ENCODE measurements at regions of chr5 and their contacts with region 1.

Region 1: DNA sequence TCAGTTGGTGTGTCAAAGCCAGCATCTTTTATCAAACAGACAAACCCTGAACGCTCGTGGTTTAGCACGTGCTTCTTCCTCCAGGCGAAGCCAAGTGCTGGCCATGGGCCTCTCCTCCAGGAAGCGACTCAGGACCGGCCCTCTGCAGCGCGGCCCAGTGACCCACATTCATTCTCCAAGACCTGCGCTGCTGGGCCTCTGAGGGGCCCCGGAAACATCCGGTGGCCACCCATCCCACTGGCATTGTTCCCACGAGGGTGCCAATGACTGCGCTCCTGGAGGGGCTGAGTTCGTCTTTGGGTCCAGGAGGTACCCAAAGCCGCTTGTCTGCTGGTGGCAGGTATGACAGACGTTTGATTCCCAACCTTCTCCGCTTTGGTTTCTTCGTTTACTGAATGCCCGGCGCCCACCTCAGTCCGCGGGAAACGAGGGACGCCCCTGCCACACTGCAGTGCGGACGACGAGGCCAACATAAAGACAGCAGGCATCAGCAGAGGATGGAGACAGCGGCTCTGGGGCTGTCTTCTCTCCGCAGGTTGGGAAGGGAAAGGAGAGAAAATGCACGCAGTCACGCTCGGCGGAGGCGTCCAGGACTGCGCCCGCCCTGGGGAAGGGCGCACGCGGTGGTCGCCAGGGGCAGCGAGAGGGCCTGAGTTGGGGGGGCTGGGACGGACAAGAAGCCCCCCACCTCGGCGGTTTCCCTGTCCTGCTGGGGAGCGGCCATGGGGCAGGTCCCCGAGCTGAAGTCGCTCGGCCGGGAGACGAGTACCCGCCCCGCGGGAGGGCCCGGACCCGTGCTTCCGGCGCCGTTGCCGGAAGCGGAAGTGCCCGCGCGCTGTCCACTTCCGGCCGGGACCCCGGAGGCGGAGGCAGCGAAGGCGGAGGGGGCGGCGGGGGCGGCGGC is at the start of gene EXOC3:
- DNase-seq: peak; percentile 81
- H3K4me3 Mint-ChIP-seq: peak within 1 kb of the TSS; percentile 95
- H3K27ac Mint-ChIP-seq: peak within 1 kb of the TSS; percentile 89
- H3K4me1 Mint-ChIP-seq: peaks cover 30% of the 10 kb centered on the region
- H3K27me3 Mint-ChIP-seq: no peaks in the 10 kb centered on the region
- total RNA-seq, gene EXOC3: 49.9 to 54.5 TPM

Region 2: DNA sequence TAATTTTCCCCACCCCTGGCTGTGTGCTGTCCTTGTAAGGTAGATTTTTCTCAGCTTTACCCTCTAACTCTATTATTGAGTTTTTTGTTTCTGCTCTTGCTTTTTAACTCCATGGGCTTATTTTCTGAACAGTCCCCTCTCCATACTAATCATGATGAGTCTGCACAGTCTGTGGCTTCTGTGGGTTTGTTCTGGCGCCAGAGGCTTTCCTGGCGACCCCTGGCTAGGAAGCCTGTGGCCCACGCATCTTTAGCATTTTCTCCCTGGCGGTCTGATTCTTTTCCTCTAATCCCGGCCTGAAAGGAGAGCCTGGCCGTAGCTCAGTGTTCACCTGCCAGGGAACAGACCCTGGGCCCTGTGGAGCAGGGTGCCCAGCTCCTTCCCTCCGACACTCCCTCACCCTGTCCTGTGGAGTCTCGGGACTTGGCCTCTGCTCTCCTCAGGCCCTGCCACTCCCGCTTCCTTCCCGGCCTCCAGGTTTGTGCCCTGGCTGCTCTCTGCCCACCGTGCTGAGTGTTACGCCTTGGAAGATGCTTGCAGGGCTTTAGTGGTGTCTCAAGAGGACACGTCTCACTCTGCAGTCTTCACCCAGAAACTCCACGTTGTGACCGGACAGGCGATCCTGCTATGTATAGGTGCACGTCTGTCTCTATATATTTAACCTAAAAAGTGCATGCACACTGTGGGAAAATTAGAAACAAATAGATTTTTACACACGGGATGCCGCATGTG is 283.0 kb before region 1 on chr5:
- CTCF ChIA-PET with region 1: no interaction called
- POLR2A ChIA-PET with region 1: no interaction called
- intact Hi-C with region 1: no loop called
- DNase-seq: no peak
- H3K4me3 Mint-ChIP-seq: no peak overlapping the region
- H3K27ac Mint-ChIP-seq: no peak overlapping the region
- H3K4me1 Mint-ChIP-seq: no peaks in the 10 kb centered on the region
- H3K27me3 Mint-ChIP-seq: peaks cover 14% of the 10 kb centered on the region

Region 3: GRCh38 chr5:270340-270739 is 172.2 kb before region 1 on chr5:
- CTCF ChIA-PET with region 1: no interaction called
- POLR2A ChIA-PET with region 1: no interaction called
- intact Hi-C with region 1: loop called (anchors 5 kb)
- DNase-seq: no peak
- H3K4me3 Mint-ChIP-seq: peak overlapping the region; percentile 85
- H3K27ac Mint-ChIP-seq: peak overlapping the region; percentile 42
- H3K4me1 Mint-ChIP-seq: peaks cover 44% of the 10 kb centered on the region
- H3K27me3 Mint-ChIP-seq: no peaks in the 10 kb centered on the region

Region 4: GRCh38 chr5:317086-317811 is 125.3 kb before region 1 on chr5:
- CTCF ChIA-PET with region 1: interaction called, 14 read pairs
- POLR2A ChIA-PET with region 1: no interaction called
- intact Hi-C with region 1: no loop called
- DNase-seq: peak; percentile 76
- H3K4me3 Mint-ChIP-seq: no peak overlapping the region
- H3K27ac Mint-ChIP-seq: no peak overlapping the region
- H3K4me1 Mint-ChIP-seq: peaks cover 7% of the 10 kb centered on the region
- H3K27me3 Mint-ChIP-seq: peaks cover 11% of the 10 kb centered on the region

Region 5: GRCh38 chr5:431001-431710 is 11.4 kb before region 1 on chr5:
- CTCF ChIA-PET with region 1: interaction called, 12 read pairs
- POLR2A ChIA-PET with region 1: no interaction called
- intact Hi-C with region 1: no loop called
- DNase-seq: peak; percentile 61
- H3K4me3 Mint-ChIP-seq: no peak overlapping the region
- H3K27ac Mint-ChIP-seq: no peak overlapping the region
- H3K4me1 Mint-ChIP-seq: no peaks in the 10 kb centered on the region
- H3K27me3 Mint-ChIP-seq: peaks cover 13% of the 10 kb centered on the region

Region 6: DNA sequence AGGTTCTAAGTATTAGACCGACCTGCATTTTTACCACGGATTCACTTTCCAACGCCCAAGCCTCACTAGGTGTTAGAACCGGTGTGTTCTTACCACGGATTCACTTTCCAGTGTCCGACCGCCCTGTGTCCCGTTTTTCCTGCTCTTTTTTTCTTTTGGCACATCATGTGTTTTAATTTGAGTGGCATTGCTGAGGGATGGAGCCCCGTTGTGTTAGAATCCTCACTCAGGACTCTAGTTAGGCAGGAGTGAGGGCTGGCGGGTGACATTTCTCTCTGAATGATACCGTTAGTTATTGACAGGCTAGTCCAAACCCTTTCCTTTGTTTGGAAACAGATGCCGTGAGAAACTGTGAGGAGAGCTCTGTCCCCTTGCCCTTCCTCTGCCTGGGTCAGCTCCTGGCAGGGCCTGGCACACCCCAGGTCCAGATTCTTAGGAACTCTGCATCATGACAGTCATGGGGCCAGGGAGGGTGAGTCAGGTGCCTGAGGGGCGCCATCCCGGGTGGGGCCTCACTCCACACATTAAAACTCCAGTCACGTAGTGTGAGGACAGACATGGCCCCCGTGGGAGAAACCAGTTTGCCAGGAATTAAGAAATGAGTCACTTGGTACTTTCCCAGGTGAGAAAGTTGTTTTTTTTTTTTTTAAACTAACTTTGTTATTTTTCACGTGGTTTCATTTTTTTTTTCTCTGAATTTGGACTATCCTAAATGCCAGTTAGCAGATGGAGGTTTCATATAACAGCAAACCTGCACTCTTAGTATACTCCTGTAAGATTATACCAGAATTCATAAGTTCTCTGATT is 16.2 kb after region 1 on chr5:
- CTCF ChIA-PET with region 1: interaction called, 18 read pairs
- POLR2A ChIA-PET with region 1: no interaction called
- intact Hi-C with region 1: no loop called
- DNase-seq: peak; percentile 85
- H3K4me3 Mint-ChIP-seq: peak overlapping the region; percentile 47
- H3K27ac Mint-ChIP-seq: peak overlapping the region; percentile 94
- H3K4me1 Mint-ChIP-seq: peaks cover 59% of the 10 kb centered on the region
- H3K27me3 Mint-ChIP-seq: no peaks in the 10 kb centered on the region

Region 7: GRCh38 chr5:472656-473553 is 30.3 kb after region 1 on chr5:
- CTCF ChIA-PET with region 1: interaction called, 16 read pairs
- POLR2A ChIA-PET with region 1: interaction called, 15 read pairs
- intact Hi-C with region 1: loop called (anchors 2 kb)
- DNase-seq: peak; percentile 91
- H3K4me3 Mint-ChIP-seq: peak overlapping the region; percentile 84
- H3K27ac Mint-ChIP-seq: peak overlapping the region; percentile 81
- H3K4me1 Mint-ChIP-seq: peaks cover 24% of the 10 kb centered on the region
- H3K27me3 Mint-ChIP-seq: peaks cover 2% of the 10 kb centered on the region

Region 8: DNA sequence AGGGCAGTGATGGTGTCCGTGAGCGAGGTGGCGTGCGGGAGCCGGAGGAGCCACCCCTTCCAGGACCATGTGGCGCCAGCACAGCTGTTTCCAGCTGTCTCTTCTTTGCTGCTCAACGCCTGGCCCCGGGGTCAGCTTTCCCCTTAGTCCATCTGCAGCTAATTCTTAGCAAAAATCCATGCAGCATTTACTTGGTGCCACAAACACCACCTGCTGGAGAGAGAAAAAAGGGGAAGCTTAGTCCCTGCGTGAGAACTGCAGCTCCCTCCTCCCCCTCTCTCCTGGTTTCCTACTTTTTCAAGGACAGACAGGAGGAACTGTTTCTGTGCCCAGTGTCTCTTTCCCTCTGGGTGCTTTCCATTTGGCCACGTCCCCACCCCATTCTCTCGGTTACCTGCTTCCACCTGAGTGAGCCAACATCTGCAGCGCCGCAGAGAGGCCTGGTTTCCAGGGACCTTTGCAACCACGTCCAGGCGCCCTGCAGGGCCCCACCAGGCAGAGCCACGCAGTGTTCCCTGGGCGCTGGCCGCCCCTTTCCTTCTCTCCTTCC is 762.2 kb after region 1 on chr5:
- CTCF ChIA-PET with region 1: no interaction called
- POLR2A ChIA-PET with region 1: no interaction called
- intact Hi-C with region 1: no loop called
- DNase-seq: no peak
- H3K4me3 Mint-ChIP-seq: no peak overlapping the region
- H3K27ac Mint-ChIP-seq: no peak overlapping the region
- H3K4me1 Mint-ChIP-seq: no peaks in the 10 kb centered on the region
- H3K27me3 Mint-ChIP-seq: no peaks in the 10 kb centered on the region

Measured in activated CD4-positive, alpha-beta memory T cell treated with anti-CD3 and anti-CD28 coated beads for 36 hours (primary cell).